ENCODE measurements at regions of chr7 and their contacts with region 1.

Region 1: GRCh38 chr7:102024769-102025391 is 207.5 kb downstream of the CUX1 start:
- DNase-seq: peak; percentile 74

Region 2: DNA sequence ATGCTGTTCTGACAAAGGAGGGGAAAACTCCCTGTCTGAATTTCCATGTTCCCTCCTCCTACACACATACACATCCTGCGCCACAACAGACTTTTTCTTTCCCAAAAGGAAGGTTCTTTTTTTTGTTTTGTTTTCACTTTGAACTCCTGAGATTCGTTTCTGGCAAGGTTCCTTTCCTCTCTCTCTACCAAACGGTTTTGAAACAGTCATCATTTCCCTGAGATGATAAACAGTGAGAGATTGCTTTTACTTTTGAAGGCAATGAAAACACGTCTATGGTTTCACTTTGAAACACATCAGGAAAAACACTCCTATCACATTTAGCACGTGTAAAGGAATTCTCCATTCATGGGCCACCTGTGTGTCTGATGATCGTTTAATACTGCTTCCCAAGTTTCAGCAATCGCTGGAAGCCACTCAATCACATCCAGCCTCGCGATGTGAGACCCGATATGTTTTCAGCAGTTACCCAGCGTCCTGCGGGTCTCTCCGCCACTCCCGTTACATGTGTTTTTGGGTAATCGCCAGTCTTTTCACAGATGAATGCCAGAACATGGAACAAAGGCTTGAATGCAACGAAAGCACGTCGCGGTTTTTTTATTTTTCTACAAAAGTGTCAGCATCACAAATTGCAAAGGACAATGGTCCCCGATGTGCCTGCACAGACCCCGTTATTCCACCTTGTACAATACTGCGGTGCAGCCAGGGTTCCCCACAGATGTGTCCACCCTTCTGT is 270.3 kb before region 1 on chr7:
- intact Hi-C with region 1: no loop called
- DNase-seq: no peak

Region 3: DNA sequence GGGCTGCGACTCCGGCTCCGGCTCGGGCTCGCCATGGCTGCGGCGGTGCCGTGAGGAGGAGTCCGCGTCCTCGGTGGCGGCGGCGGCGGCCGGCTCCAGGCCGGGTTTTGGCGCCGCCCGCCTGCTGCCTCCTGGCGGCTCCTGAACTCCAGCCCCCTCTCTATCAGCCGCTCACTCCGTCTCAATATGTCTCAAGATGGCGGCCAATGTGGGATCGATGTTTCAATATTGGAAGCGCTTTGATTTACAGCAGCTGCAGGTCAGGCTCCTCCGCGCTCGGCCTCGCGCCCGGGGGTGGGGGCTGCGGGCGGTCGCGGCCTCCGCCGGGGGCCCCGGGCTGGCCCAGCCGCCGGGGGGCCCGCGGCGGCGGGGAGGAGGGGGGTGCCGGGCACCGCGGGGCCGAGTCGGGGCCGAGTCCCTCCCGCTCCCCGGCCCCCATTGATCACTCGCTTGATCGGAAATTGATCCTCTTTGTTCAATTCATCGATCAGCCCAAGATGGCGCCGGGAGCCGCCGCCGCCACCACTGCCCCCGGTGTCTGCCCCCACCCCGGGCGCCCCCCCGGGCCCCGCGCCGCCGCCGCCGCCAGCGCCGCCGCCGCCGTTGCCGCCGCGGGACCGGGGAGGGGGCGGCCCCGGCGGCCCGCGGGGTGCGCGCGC is 208.9 kb before region 1 on chr7:
- intact Hi-C with region 1: no loop called
- DNase-seq: peak; percentile 82

Region 4: GRCh38 chr7:102044984-102045673 is 20.2 kb after region 1 on chr7:
- intact Hi-C with region 1: loop called (anchors 2 kb)
- DNase-seq: no peak

Measured in cardiac septum (tissue), 1 donor.